ENCODE measurements at regions of chr2 and their contacts with region 1.

Region 1: GRCh38 chr2:96565111-96565510 is 28.6 kb downstream of the ARID5A start:
- DNase-seq: no peak
- H3K4me3 Mint-ChIP-seq: no peak overlapping the region
- H3K27ac Mint-ChIP-seq: no peak overlapping the region
- H3K4me1 Mint-ChIP-seq: no peaks in the 10 kb centered on the region
- H3K27me3 Mint-ChIP-seq: no peaks in the 10 kb centered on the region

Region 2: GRCh38 chr2:96527286-96528005 is 37.7 kb before region 1 on chr2:
- CTCF ChIA-PET with region 1: no interaction called
- POLR2A ChIA-PET with region 1: no interaction called
- intact Hi-C with region 1: no loop called
- DNase-seq: peak; percentile 89
- H3K4me3 Mint-ChIP-seq: peak overlapping the region; percentile 73
- H3K27ac Mint-ChIP-seq: peak overlapping the region; percentile 98
- H3K4me1 Mint-ChIP-seq: peaks cover 96% of the 10 kb centered on the region
- H3K27me3 Mint-ChIP-seq: no peaks in the 10 kb centered on the region

Region 3: DNA sequence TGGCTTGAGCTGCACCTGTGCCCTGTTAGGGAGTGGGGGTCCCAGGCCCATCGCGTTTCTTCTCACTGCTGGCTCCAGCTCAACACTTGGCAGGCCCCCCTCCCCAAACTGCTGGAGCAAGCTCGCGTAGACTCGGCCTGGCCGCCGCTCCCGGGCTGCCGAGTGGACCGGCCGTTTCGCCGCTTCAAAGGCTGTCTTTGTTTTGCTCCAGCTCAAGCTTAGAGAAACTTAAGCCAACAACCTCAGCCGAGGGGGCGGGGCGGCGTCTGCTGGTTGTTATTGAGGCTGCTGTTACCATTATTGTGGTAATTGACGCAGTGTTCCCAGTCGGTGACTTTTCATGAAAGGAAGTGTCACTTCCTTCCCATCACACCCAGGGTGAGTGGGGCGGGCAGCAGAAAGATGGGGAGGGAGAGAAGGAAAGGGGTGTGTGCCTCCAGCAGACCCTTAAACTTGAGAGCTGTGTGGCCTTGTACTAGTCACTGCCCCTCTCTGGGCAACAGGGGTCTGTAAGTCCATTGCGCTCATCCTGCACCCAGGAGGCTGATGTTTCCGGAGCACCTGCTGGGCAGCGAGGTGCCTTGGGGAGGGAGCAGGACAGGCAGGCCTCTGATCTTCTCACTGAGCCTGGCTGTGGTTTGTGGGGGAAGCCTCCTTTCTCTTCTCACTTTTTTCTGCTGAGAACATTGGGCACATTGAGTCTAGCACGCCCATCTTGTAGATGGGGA is 26.5 kb before region 1 on chr2:
- CTCF ChIA-PET with region 1: no interaction called
- POLR2A ChIA-PET with region 1: no interaction called
- intact Hi-C with region 1: no loop called
- DNase-seq: peak; percentile 93
- H3K4me3 Mint-ChIP-seq: peak overlapping the region; percentile 95
- H3K27ac Mint-ChIP-seq: peak overlapping the region; percentile 98
- H3K4me1 Mint-ChIP-seq: peaks cover 56% of the 10 kb centered on the region
- H3K27me3 Mint-ChIP-seq: no peaks in the 10 kb centered on the region

Region 4: DNA sequence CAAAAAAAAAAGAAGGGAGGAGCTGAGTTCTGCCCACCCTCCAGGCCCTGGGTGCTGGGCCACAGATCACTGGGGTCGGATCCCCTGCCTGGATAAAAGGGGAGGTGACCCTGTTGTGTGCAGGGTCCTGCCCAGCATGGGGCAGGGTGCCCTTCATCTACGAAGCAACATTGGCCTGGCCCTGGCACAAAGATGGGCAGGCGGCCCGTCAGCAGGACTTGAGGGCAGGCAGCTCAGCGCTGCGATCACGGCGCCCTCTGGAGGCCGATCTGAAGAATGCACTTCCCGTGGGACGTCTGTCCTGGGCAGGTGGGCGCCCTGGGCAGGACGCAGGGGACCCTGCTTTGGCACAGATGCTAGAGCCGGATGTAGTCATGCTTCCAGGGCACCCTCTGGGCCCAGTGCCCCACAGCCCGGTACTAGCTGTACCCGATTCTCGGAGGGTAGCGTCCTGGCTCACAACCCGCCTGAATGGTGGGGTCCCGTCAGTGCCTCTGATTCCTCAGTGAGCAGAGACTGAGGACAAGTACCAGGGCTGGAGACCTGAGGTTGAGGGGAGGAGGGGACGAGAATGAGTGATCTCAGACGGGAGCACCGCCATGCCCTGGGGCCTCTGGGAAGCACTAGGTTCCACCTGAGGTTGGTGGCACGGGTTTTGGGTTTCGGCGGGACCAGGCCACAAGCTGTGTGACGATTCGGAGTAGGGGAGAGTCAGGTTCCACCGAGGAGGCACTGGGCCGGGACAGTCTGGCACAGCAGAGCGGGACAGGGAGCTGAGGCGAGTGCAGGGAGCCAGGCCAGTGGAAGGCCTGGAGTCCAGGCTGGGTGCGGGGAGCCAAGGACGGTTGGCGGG is 10.6 kb before region 1 on chr2:
- CTCF ChIA-PET with region 1: interaction called, 14 read pairs
- POLR2A ChIA-PET with region 1: no interaction called
- intact Hi-C with region 1: no loop called
- DNase-seq: peak; percentile 78
- H3K4me3 Mint-ChIP-seq: peak overlapping the region; percentile 43
- H3K27ac Mint-ChIP-seq: peak overlapping the region; percentile 77
- H3K4me1 Mint-ChIP-seq: peaks cover 41% of the 10 kb centered on the region
- H3K27me3 Mint-ChIP-seq: peaks cover 1% of the 10 kb centered on the region

Measured in activated CD4-positive, alpha-beta memory T cell treated with anti-CD3 and anti-CD28 coated beads for 36 hours (primary cell).